Activated CD8-positive, alpha-beta T cell treated with anti-CD3 and anti-CD28 coated beads for 36 hours (primary cell): ENCODE measurements at regions of chr10 and their contacts with region 1.

Region 1: DNA sequence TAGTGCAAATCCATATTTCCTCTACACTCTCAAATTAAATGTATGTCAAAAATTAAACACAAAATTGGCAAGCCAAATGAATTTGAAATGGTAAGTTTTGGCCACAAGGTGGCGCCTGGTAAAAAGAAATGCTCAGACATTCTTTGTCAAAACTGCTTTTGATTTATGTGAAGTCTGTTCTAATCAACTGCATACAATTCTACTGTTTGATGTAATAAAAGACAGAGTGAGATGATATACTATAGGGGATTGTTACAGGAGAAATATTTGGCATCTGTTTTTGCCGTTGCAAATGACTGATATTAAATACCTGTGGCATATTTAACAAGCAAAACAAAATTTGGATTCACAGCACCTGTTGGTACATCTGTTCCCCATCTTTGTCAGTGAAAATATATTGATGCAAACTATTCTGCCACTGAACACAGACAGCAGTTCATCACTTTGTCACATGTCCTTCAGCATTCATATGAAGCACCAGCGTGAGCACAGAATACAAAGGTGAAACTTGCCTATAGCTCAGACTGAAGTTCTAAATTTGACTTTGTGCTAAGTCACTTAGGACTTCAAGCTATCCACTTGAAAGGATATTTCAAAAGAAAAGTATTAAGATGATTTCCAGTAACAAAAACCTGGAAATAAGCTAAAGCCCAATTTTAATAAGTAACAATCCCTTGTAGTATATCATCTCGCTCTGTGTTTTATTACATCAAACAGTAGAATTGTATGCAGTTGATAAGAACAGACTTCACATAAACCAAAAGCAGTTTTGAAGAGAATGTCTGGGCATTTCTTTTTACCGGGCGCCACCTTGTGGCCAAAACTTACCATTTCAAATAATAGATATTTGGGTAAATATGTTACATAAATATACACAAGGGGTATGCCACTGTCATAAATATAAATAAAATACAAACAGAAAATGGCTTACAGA is 10.2 kb upstream of the CH25H start:
- DNase-seq: peak; percentile 83
- ATAC-seq: peak; percentile 39
- H3K4me3 Mint-ChIP-seq: no peak overlapping the region
- H3K27ac Mint-ChIP-seq: no peak overlapping the region
- H3K4me1 Mint-ChIP-seq: peaks cover 12% of the 10 kb centered on the region
- H3K27me3 Mint-ChIP-seq: peaks cover 1% of the 10 kb centered on the region
- CTCF ChIP-seq: peak; percentile 57

Region 2: GRCh38 chr10:88949912-88950837 is 267.1 kb before region 1 on chr10:
- CTCF ChIA-PET with region 1: interaction called, 13 read pairs
- POLR2A ChIA-PET with region 1: no interaction called
- intact Hi-C with region 1: no loop called
- DNase-seq: no peak
- ATAC-seq: no peak
- H3K4me3 Mint-ChIP-seq: no peak overlapping the region
- H3K27ac Mint-ChIP-seq: no peak overlapping the region
- H3K4me1 Mint-ChIP-seq: peaks cover 7% of the 10 kb centered on the region
- H3K27me3 Mint-ChIP-seq: no peaks in the 10 kb centered on the region
- CTCF ChIP-seq: no peak

Region 3: GRCh38 chr10:89022734-89023133 is 194.6 kb before region 1 on chr10:
- CTCF ChIA-PET with region 1: interaction called, 27 read pairs
- POLR2A ChIA-PET with region 1: interaction called, 3 read pairs
- intact Hi-C with region 1: no loop called
- DNase-seq: no peak
- ATAC-seq: no peak
- H3K4me3 Mint-ChIP-seq: no peak overlapping the region
- H3K27ac Mint-ChIP-seq: no peak overlapping the region
- H3K4me1 Mint-ChIP-seq: no peaks in the 10 kb centered on the region
- H3K27me3 Mint-ChIP-seq: no peaks in the 10 kb centered on the region
- CTCF ChIP-seq: no peak

Region 4: GRCh38 chr10:89175816-89176215 is 41.5 kb before region 1 on chr10:
- CTCF ChIA-PET with region 1: interaction called, 12 read pairs
- POLR2A ChIA-PET with region 1: no interaction called
- intact Hi-C with region 1: no loop called
- DNase-seq: no peak
- ATAC-seq: no peak
- H3K4me3 Mint-ChIP-seq: no peak overlapping the region
- H3K27ac Mint-ChIP-seq: no peak overlapping the region
- H3K4me1 Mint-ChIP-seq: peaks cover 2% of the 10 kb centered on the region
- H3K27me3 Mint-ChIP-seq: peaks cover 21% of the 10 kb centered on the region
- CTCF ChIP-seq: no peak

Region 5: GRCh38 chr10:89228962-89229361 is 11.6 kb after region 1 on chr10:
- CTCF ChIA-PET with region 1: interaction called, 24 read pairs
- POLR2A ChIA-PET with region 1: no interaction called
- intact Hi-C with region 1: no loop called
- DNase-seq: no peak
- ATAC-seq: no peak
- H3K4me3 Mint-ChIP-seq: no peak overlapping the region
- H3K27ac Mint-ChIP-seq: no peak overlapping the region
- H3K4me1 Mint-ChIP-seq: peaks cover 9% of the 10 kb centered on the region
- H3K27me3 Mint-ChIP-seq: no peaks in the 10 kb centered on the region
- CTCF ChIP-seq: no peak

Region 6: DNA sequence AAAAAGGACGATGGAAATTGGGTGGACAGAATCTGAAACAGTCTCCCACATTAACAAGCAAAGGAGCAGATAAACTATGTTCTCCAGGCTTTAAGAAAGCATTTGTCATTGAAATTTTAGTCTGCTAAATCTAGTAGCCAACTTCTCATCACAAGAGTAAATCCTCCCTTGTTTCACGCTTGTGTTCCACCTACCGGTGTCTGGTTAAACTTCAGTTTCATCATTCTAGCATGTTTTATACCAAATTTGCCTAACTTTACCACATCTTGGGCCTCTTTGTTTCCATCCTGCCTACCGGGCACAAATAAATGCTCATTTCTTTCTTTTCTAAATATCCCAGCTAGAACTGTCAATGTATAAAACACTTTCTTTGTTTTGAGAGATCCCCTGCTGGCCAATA is 28.5 kb after region 1 on chr10:
- CTCF ChIA-PET with region 1: interaction called, 16 read pairs
- POLR2A ChIA-PET with region 1: no interaction called
- intact Hi-C with region 1: no loop called
- DNase-seq: no peak
- ATAC-seq: no peak
- H3K4me3 Mint-ChIP-seq: no peak overlapping the region
- H3K27ac Mint-ChIP-seq: no peak overlapping the region
- H3K4me1 Mint-ChIP-seq: peaks cover 18% of the 10 kb centered on the region
- H3K27me3 Mint-ChIP-seq: no peaks in the 10 kb centered on the region
- CTCF ChIP-seq: no peak

Region 7: GRCh38 chr10:90245623-90246022 is 1028.3 kb after region 1 on chr10:
- CTCF ChIA-PET with region 1: no interaction called
- POLR2A ChIA-PET with region 1: no interaction called
- intact Hi-C with region 1: no loop called
- DNase-seq: no peak
- ATAC-seq: no peak
- H3K4me3 Mint-ChIP-seq: no peak overlapping the region
- H3K27ac Mint-ChIP-seq: no peak overlapping the region
- H3K4me1 Mint-ChIP-seq: no peaks in the 10 kb centered on the region
- H3K27me3 Mint-ChIP-seq: peaks cover 3% of the 10 kb centered on the region
- CTCF ChIP-seq: no peak